ENCODE measurements at regions of chr1 and their contacts with region 1.

Region 1: GRCh38 chr1:67561704-67562113 is 123.3 kb upstream of the GADD45A start:
- DNase-seq: peak; percentile 92 to 98
- H3K4me3 ChIP-seq: no peak overlapping the region
- H3K27ac ChIP-seq: no peak overlapping the region
- H3K4me1 ChIP-seq: no peaks in the 10 kb centered on the region
- H3K27me3 ChIP-seq: no peaks in the 10 kb centered on the region
- CTCF ChIP-seq: peak; percentile 75 to 87 (median 81)
- POLR2A ChIP-seq: no peak

Region 2: GRCh38 chr1:67685067-67685557 is 123.4 kb after region 1 on chr1 and contains the start of gene GADD45A:
- intact Hi-C with region 1: loop called (anchors 10 kb)
- DNase-seq: peak; percentile 99
- H3K4me3 ChIP-seq: peak within 1 kb of the TSS; percentile 9 to 95 (median 94)
- H3K27ac ChIP-seq: peak within 1 kb of the TSS; percentile 96 to 99 (median 98)
- H3K4me1 ChIP-seq: peaks cover 15 to 27% of the 10 kb centered on the region in 2 donors
- H3K27me3 ChIP-seq: no peaks in the 10 kb centered on the region
- CTCF ChIP-seq: peak in 1 of 6 experiments; percentile 19
- POLR2A ChIP-seq: peak; percentile 99 to 100
- total RNA-seq, gene GADD45A: 27.2 to 95.5 (median 62.9) TPM

Region 3: DNA sequence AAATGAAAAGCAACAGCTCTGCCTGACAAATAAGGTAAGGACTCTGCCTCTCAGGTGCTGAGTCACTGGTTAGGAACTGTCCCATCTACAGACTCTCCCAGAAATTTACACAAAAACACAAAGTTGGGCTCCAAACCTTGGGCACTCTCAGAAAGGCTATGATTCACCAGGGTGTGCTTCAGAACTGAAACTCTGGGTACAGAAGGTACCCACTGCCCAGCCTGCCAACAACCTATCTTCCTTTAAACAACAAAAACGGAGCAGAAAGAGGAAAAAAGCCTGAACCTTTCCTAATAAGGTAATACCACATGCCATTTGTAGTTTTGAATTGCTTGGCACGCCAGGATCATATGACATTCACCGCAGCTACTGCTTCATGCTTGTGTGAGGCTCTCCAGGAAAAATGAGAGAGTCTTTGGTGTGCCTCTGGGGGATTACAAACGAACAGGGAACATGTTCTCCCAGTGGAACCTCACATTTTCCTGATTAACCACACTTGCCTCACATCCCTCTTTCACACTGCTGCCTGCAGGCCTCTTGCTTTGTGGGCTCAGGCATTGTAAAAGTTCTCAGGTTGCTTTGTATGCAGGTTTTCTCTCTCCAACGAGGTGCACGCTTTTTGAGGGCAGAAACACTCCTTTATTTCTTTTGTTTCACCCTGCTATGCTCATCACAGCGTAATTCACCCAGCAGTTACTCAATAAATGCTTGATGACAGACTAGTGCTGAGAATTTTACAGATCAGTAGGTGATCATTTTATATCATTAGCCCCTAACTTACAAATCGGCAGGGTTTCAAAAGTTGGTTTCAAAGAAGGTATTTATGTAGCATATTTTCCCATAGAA is 188.4 kb after region 1 on chr1:
- intact Hi-C with region 1: loop called (anchors 10 kb)
- DNase-seq: peak; percentile 83 to 85
- H3K4me3 ChIP-seq: no peak overlapping the region
- H3K27ac ChIP-seq: peak overlapping the region; percentile 95 to 96 (median 95)
- H3K4me1 ChIP-seq: peaks cover 59 to 86% of the 10 kb centered on the region in 2 donors
- H3K27me3 ChIP-seq: no peaks in the 10 kb centered on the region
- CTCF ChIP-seq: no peak
- POLR2A ChIP-seq: peak in 1 of 2 donors; percentile 83

Region 4: GRCh38 chr1:67824766-67825165 is 263.1 kb after region 1 on chr1:
- intact Hi-C with region 1: loop called (anchors 10 kb)
- DNase-seq: no peak
- H3K4me3 ChIP-seq: no peak overlapping the region
- H3K27ac ChIP-seq: no peak overlapping the region
- H3K4me1 ChIP-seq: peaks cover 4 to 9% of the 10 kb centered on the region in 2 donors
- H3K27me3 ChIP-seq: no peaks in the 10 kb centered on the region
- CTCF ChIP-seq: no peak
- POLR2A ChIP-seq: no peak

Measured in thyroid gland (tissue), 4 donors.